ENCODE measurements at regions of chr9 and their contacts with region 1.

Region 1: GRCh38 chr9:129139993-129140396 is 28.8 kb downstream of the PTPA start:
- DNase-seq: peak; percentile 65 to 86 (median 70)
- H3K4me3 ChIP-seq: peak overlapping the region; percentile 61
- H3K4me3 Mint-ChIP-seq: peak overlapping the region; percentile 80 to 97 (median 87)
- H3K27ac ChIP-seq: peak overlapping the region; percentile 95
- H3K27ac Mint-ChIP-seq: peak overlapping the region; percentile 82 to 100 (median 94)
- H3K4me1 ChIP-seq: peaks cover 38% of the 10 kb centered on the region
- H3K4me1 Mint-ChIP-seq: peaks cover 28 to 47% (median 29%) of the 10 kb centered on the region in 3 donors
- H3K27me3 ChIP-seq: no peaks in the 10 kb centered on the region
- H3K27me3 Mint-ChIP-seq: no peaks in the 10 kb centered on the region

Region 2: GRCh38 chr9:128992995-128993394 is 147.0 kb before region 1 on chr9:
- CTCF ChIA-PET with region 1: no interaction called
- POLR2A ChIA-PET with region 1: no interaction called
- DNase-seq: no peak
- H3K4me3 ChIP-seq: no peak overlapping the region
- H3K4me3 Mint-ChIP-seq: no peak overlapping the region
- H3K27ac ChIP-seq: no peak overlapping the region
- H3K27ac Mint-ChIP-seq: peak overlapping the region in 1 of 8 donors; percentile 62
- H3K4me1 ChIP-seq: no peaks in the 10 kb centered on the region
- H3K4me1 Mint-ChIP-seq: no peaks in the 10 kb centered on the region
- H3K27me3 ChIP-seq: no peaks in the 10 kb centered on the region
- H3K27me3 Mint-ChIP-seq: no peaks in the 10 kb centered on the region

Region 3: DNA sequence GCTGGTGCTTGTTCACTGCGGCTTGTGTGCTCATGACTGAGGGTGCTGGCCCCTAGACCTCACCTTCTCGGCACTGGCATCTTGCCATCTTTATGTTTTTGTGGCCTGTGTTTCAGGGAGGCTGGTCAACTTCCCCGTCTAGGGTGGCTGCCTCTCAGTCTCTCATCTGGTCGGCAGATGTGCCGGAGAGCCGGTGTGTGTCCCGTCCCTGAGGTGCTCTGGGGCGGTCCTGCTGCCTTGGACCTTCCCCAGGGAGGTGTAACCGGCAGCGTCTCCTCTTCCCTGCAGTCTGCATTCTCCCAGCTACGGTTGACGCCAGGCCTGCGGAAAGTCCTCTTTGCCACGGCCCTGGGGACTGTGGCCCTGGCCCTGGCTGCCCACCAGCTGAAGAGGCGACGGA is 98.0 kb before region 1 on chr9:
- CTCF ChIA-PET with region 1: no interaction called
- POLR2A ChIA-PET with region 1: no interaction called
- DNase-seq: no peak
- H3K4me3 ChIP-seq: no peak overlapping the region
- H3K4me3 Mint-ChIP-seq: no peak overlapping the region
- H3K27ac ChIP-seq: no peak overlapping the region
- H3K27ac Mint-ChIP-seq: no peak overlapping the region
- H3K4me1 ChIP-seq: peaks cover 23% of the 10 kb centered on the region
- H3K4me1 Mint-ChIP-seq: peaks cover 23 to 35% (median 29%) of the 10 kb centered on the region in 3 donors
- H3K27me3 ChIP-seq: no peaks in the 10 kb centered on the region
- H3K27me3 Mint-ChIP-seq: no peaks in the 10 kb centered on the region

Region 4: DNA sequence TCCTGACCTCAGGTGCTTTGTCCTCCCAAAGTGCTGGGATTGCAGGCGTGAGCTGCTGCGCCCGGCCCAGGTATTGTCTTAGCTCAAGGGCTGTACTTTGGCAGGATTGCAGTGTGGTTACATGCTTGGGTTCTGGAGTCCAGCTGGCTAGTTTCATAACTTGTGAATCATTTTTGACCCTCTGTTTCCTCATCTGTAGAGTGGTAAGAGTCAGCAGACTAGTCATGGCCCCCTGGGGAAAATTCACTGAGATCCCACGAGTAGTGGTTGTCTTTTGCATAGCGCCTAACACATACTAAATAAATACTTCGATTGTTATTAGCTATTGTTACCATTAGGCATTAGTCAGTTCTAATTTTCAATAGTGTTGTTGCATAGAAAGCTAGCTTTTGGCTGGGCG is 14.5 kb before region 1 on chr9:
- CTCF ChIA-PET with region 1: interaction called, 49 read pairs
- POLR2A ChIA-PET with region 1: interaction called, 3 read pairs
- DNase-seq: no peak
- H3K4me3 ChIP-seq: no peak overlapping the region
- H3K4me3 Mint-ChIP-seq: no peak overlapping the region
- H3K27ac ChIP-seq: no peak overlapping the region
- H3K27ac Mint-ChIP-seq: no peak overlapping the region
- H3K4me1 ChIP-seq: no peaks in the 10 kb centered on the region
- H3K4me1 Mint-ChIP-seq: peaks cover 0 to 4% (median 0%) of the 10 kb centered on the region in 3 donors
- H3K27me3 ChIP-seq: no peaks in the 10 kb centered on the region
- H3K27me3 Mint-ChIP-seq: no peaks in the 10 kb centered on the region

Region 5: GRCh38 chr9:129352146-129352865 is 212.3 kb after region 1 on chr9:
- CTCF ChIA-PET with region 1: no interaction called
- POLR2A ChIA-PET with region 1: interaction called, 13 read pairs
- DNase-seq: no peak
- H3K4me3 ChIP-seq: peak overlapping the region; percentile 22
- H3K4me3 Mint-ChIP-seq: peak overlapping the region in 2 of 7 donors; percentile 51 to 53
- H3K27ac ChIP-seq: no peak overlapping the region
- H3K27ac Mint-ChIP-seq: peak overlapping the region in 1 of 8 donors; percentile 57
- H3K4me1 ChIP-seq: no peaks in the 10 kb centered on the region
- H3K4me1 Mint-ChIP-seq: peaks cover 0 to 4% (median 2%) of the 10 kb centered on the region in 3 donors
- H3K27me3 ChIP-seq: peaks cover 3% of the 10 kb centered on the region
- H3K27me3 Mint-ChIP-seq: peaks cover 14 to 18% of the 10 kb centered on the region in 2 donors

Region 6: GRCh38 chr9:129610473-129611301 is 470.7 kb after region 1 on chr9:
- CTCF ChIA-PET with region 1: interaction called, 10 read pairs
- POLR2A ChIA-PET with region 1: no interaction called
- DNase-seq: peak; percentile 67 to 82 (median 69)
- H3K4me3 ChIP-seq: peak overlapping the region; percentile 77
- H3K4me3 Mint-ChIP-seq: peak overlapping the region; percentile 73 to 90 (median 84)
- H3K27ac ChIP-seq: peak overlapping the region; percentile 61
- H3K27ac Mint-ChIP-seq: peak overlapping the region; percentile 36 to 99 (median 82)
- H3K4me1 ChIP-seq: peaks cover 29% of the 10 kb centered on the region
- H3K4me1 Mint-ChIP-seq: peaks cover 26 to 51% (median 28%) of the 10 kb centered on the region in 3 donors
- H3K27me3 ChIP-seq: no peaks in the 10 kb centered on the region
- H3K27me3 Mint-ChIP-seq: peaks cover 0 to 9% of the 10 kb centered on the region in 2 donors

Region 7: DNA sequence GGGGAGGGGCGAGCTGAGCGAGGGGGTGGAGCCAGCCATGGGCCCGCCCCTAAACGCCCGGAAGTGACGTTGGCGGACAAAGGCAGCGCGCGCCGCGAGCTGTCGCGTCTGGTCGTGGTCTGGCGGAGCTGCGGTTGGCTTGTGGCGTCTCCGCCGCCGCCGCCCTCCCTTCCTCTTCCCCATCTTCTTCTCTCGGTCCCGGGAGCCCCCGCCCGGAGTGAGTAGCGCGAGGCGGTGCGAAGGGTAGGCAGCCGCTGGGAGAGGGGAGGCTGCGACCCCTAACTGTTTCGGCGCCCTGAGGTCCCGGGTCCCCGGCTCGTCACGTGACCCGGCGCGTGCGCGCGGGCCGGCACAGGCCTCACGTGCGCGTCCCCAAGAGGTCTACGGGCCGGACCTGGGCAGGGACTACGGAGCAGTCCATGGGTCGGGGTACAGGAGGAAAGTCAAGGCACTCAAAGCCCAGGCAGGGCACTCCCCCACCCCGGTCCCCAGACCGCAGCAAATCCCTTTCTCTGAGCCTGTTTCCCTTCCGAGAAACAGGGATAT is 486.2 kb after region 1 on chr9 and contains the start of gene NTMT1:
- CTCF ChIA-PET with region 1: interaction called, 70 read pairs
- POLR2A ChIA-PET with region 1: interaction called, 14 read pairs
- DNase-seq: peak; percentile 82 to 93 (median 89)
- H3K4me3 ChIP-seq: peak within 1 kb of the TSS; percentile 100
- H3K4me3 Mint-ChIP-seq: peak within 1 kb of the TSS; percentile 82 to 93 (median 89)
- H3K27ac ChIP-seq: peak within 1 kb of the TSS; percentile 97
- H3K27ac Mint-ChIP-seq: peak within 1 kb of the TSS; percentile 86 to 99 (median 97)
- H3K4me1 ChIP-seq: peaks cover 54% of the 10 kb centered on the region
- H3K4me1 Mint-ChIP-seq: peaks cover 48 to 63% (median 62%) of the 10 kb centered on the region in 3 donors
- H3K27me3 ChIP-seq: peaks cover 8% of the 10 kb centered on the region
- H3K27me3 Mint-ChIP-seq: peaks cover 6 to 11% of the 10 kb centered on the region in 2 donors
- total RNA-seq, gene NTMT1: 65.5 to 68.9 TPM